Posterior cingulate gyrus (tissue), 11 donors: ENCODE measurements at regions of chr2 and their contacts with region 1.

Region 1: DNA sequence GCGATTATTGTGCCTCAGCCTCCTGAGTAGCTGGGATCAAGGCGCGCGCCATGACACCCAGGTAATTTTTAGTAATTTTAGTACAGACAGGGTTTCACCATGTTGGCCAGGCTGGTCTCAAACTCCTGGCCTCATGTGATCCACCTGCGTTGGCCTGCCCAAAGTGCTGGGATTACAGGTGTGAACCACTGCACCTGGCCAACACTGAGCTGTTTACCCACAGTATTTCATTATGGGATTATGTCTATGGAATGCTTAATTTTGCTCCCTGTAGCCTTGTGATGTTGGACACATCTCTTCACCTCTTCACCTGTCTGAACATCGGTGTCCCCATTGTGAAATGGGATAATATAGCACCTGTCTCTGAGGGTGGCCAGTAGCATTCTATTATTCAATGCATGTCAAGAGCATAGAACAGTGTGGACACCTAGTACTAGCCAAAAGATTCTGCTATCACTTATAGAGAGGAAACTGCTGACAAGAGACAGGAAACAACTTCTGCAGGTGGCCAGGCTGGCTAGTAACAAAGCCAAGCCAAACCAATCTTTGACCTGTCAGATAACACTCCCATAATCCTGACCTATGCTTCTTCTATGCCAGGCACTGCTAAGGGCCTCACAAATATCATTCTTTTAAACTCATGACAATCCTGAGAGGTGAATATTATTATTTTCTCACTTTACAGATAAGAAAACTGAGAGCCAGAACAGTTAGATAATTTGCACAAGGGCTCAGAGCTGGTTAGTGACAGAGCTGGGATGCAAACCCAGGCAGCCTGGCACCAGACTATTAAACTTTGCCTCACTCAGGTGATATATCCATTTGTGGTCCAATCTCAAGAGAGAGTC is 29.4 kb upstream of the REEP1 start:
- DNase-seq: no peak

Region 2: DNA sequence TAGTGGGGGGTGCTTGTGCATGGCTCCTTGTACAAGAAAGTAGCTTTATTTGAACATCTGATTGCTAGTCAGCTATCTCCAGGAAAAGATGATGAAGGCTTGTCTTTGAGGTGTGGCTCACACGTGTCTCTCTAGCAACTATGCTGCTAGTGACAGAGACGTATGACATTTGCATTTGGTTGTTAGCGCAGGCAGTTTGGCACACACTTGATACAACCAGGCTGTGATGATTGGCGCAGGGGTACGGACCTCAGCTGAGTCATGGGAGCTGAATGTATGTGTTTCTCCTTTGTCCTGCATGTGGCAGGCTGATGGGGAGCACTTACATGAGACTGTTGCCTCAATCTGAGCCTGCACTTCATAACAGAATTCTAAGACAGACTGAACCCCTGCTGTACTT is 231.2 kb before region 1 on chr2:
- intact Hi-C with region 1: no loop called
- DNase-seq: peak in 2 of 10 donors; percentile 4 to 17

Region 3: GRCh38 chr2:86238354-86238753 is 128.5 kb before region 1 on chr2:
- intact Hi-C with region 1: no loop called
- DNase-seq: peak in 1 of 10 donors; percentile 63

Region 4: DNA sequence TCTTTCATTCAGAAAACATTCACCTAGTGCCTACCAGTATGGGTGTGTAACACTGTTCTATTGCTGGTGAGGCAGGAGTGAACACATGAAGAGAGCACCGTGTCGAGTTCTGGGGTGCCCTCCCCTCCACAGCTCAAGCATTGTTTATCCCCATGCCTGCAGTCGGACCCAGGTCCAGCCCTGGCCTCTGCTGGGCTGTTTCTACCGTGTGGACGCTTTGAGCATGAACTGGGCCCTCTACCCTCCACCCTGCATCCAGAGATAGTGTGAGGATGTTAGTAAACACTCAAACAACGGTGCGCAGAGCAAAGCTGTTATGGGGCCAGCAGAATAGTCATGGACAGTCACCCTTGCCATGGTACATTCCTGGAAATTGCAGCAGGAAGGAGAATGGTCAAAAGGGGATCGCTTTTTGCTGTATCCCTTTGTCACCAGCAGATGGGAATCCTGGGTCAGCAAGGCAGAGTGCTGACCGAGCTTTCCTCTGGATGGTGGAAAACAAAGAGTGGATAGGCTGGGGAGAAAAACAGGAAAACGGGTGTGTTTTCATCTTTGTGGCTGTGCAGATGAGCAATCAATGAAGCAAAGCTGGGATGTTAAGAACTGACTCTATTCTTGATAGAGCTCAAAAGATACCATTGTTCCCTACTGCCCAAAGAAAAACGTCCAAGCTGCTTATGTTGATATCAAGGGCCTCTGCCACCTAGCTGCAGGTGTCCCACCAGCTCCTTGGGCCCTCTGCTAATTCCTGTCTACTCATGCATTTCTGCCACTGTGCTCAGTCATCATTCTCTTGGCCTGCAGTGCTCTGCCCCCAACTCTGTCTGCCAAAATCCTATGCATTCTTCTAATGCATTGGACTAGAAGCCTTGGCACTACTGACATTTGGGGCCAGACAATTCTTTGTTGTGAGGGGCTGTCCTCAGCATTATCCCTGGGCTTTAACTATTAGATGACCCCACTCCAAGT is 68.2 kb before region 1 on chr2:
- intact Hi-C with region 1: loop called (anchors 2 kb)
- DNase-seq: peak in 5 of 10 donors; percentile 35 to 91 (median 41)

Region 5: GRCh38 chr2:86398500-86399474 is 31.9 kb after region 1 on chr2:
- intact Hi-C with region 1: no loop called
- DNase-seq: no peak

Region 6: GRCh38 chr2:86744152-86744551 is 377.3 kb after region 1 on chr2:
- intact Hi-C with region 1: no loop called
- DNase-seq: no peak